Aorta (tissue), 5 donors: ENCODE measurements at regions of chr2 and their contacts with region 1.

Region 1: DNA sequence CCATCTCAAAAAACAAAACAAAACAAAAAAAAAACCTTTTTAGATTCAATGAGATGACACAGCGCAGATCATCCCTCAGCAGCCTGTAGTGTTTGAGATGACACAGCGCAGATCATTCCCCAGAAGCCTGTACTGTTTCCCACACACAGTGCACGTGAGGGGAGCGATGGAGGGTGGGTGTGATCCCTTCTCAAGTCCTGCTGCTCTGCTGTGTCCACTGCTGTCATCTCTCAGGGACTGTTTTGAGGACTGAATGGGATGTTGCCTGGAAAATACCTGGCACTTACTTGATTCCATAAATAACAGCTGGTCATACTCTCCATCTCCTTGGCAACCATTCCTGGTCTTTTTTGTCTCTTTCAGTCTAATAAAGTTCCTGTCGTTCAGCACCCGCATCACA is 25.7 kb downstream of the TGOLN2 start:
- DNase-seq: no peak
- ATAC-seq: no peak
- H3K4me3 ChIP-seq: no peak overlapping the region
- H3K27ac ChIP-seq: no peak overlapping the region
- H3K4me1 ChIP-seq: no peaks in the 10 kb centered on the region
- H3K27me3 ChIP-seq: no peaks in the 10 kb centered on the region

Region 2: DNA sequence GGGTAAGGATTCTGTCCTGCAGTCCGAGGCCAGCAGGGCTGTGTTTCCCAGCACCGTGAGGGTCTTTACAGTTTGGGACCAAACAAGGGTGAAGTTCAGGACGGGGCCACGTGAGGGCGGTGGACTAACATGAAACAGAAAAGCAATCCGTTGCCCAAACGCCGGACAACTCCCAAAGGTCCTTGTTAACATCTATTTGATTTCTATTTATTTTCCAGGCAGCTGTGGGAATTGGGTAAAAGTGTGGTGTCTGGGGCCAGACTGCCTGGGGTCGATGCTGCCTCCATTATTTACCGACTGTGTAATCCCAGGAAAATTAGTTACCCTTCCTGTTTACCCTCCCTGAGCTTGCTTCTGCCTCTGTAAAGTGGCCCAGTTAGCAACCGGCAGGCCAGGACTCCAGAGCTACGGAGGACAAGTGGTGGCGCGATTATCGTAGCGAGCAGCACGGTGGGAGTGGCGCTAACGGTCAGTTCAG is 235.2 kb before region 1 on chr2:
- intact Hi-C with region 1: loop called (anchors 2 to 5 kb)
- DNase-seq: peak; percentile 84 to 92
- ATAC-seq: peak; percentile 84
- H3K4me3 ChIP-seq: no peak overlapping the region
- H3K27ac ChIP-seq: no peak overlapping the region
- H3K4me1 ChIP-seq: peaks cover 0 to 2% of the 10 kb centered on the region in 2 donors
- H3K27me3 ChIP-seq: no peaks in the 10 kb centered on the region